B cell (primary cell): ENCODE measurements at regions of chr4 and their contacts with region 1.

Region 1: DNA sequence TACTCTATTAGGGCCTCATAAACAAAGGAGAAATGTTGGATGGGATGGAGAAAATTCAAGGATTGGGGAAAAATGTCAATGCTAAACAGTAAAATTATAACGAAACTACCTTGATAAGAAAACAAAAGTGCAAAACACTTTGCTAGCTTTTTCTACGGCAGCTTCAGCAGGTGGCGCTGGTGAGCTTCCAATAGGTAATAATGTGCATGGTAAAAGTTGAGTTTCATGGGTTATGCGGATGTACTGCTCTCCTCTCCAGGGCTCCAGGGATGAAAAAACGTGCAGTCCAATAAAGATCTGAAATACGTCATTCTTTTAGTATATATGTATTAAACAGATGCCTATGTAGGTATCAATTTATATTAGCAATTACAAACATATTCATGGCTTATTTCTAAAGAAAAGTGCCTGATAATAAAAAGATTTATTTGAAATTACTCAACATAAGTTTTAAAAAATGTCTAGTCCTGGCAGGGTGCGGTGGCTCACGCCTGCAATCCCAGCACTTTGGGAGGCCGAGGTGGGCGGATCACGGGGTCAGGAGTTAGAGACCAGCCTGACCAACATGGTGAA is 239.6 kb downstream of the GRXCR1 start:
- DNase-seq: peak; percentile 57
- ATAC-seq: no peak
- H3K4me3 ChIP-seq: no peak overlapping the region
- H3K4me3 Mint-ChIP-seq: no peak overlapping the region
- H3K27ac ChIP-seq: no peak overlapping the region
- H3K27ac Mint-ChIP-seq: no peak overlapping the region
- H3K4me1 ChIP-seq: no peaks in the 10 kb centered on the region
- H3K4me1 Mint-ChIP-seq: peaks cover 1% of the 10 kb centered on the region
- H3K27me3 ChIP-seq: no peaks in the 10 kb centered on the region
- H3K27me3 Mint-ChIP-seq: no peaks in the 10 kb centered on the region
- CTCF ChIP-seq: peak; percentile 78

Region 2: DNA sequence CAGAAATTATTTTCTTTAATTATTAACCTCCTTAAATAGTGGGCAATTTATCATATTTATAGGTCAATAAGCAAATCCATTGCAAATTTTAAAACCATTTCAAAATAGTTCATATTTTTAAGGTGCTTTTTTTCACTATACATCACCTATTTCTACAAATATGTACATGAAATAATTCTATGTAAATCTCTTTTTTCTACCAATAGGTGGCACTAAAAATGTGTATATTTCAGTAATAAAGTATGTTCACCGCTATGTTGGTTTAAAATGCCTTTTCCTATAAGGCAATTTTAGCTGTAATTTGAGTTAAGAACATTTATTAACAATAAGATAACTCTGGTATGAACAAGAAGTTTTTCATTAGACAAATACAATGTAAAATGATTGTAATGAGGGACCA is 644.3 kb after region 1 on chr4:
- CTCF ChIA-PET with region 1: no interaction called
- POLR2A ChIA-PET with region 1: no interaction called
- intact Hi-C with region 1: loop called (anchors 5 kb)
- DNase-seq: no peak
- ATAC-seq: no peak
- H3K4me3 ChIP-seq: no peak overlapping the region
- H3K4me3 Mint-ChIP-seq: no peak overlapping the region
- H3K27ac ChIP-seq: no peak overlapping the region
- H3K27ac Mint-ChIP-seq: no peak overlapping the region
- H3K4me1 ChIP-seq: no peaks in the 10 kb centered on the region
- H3K4me1 Mint-ChIP-seq: peaks cover 9% of the 10 kb centered on the region
- H3K27me3 ChIP-seq: no peaks in the 10 kb centered on the region
- H3K27me3 Mint-ChIP-seq: no peaks in the 10 kb centered on the region
- CTCF ChIP-seq: no peak

Region 3: GRCh38 chr4:44493924-44494323 is 1361.8 kb after region 1 on chr4:
- CTCF ChIA-PET with region 1: interaction called, 7 read pairs
- POLR2A ChIA-PET with region 1: no interaction called
- intact Hi-C with region 1: loop called (anchors 5 kb)
- DNase-seq: no peak
- ATAC-seq: no peak
- H3K4me3 ChIP-seq: no peak overlapping the region
- H3K4me3 Mint-ChIP-seq: no peak overlapping the region
- H3K27ac ChIP-seq: no peak overlapping the region
- H3K27ac Mint-ChIP-seq: no peak overlapping the region
- H3K4me1 ChIP-seq: no peaks in the 10 kb centered on the region
- H3K4me1 Mint-ChIP-seq: no peaks in the 10 kb centered on the region
- H3K27me3 ChIP-seq: no peaks in the 10 kb centered on the region
- H3K27me3 Mint-ChIP-seq: no peaks in the 10 kb centered on the region
- CTCF ChIP-seq: peak; percentile 28

Region 4: GRCh38 chr4:44629280-44629866 is 1497.3 kb after region 1 on chr4:
- CTCF ChIA-PET with region 1: interaction called, 23 read pairs
- POLR2A ChIA-PET with region 1: no interaction called
- intact Hi-C with region 1: no loop called
- DNase-seq: peak; percentile 60
- ATAC-seq: peak; percentile 83
- H3K4me3 ChIP-seq: no peak overlapping the region
- H3K4me3 Mint-ChIP-seq: no peak overlapping the region
- H3K27ac ChIP-seq: no peak overlapping the region
- H3K27ac Mint-ChIP-seq: no peak overlapping the region
- H3K4me1 ChIP-seq: no peaks in the 10 kb centered on the region
- H3K4me1 Mint-ChIP-seq: peaks cover 1% of the 10 kb centered on the region
- H3K27me3 ChIP-seq: peaks cover 0 to 3% (median 0%) of the 10 kb centered on the region in 4 experiments
- H3K27me3 Mint-ChIP-seq: peaks cover 13% of the 10 kb centered on the region
- CTCF ChIP-seq: peak; percentile 79